ENCODE measurements at regions of chr1 and their contacts with region 1.

Region 1: DNA sequence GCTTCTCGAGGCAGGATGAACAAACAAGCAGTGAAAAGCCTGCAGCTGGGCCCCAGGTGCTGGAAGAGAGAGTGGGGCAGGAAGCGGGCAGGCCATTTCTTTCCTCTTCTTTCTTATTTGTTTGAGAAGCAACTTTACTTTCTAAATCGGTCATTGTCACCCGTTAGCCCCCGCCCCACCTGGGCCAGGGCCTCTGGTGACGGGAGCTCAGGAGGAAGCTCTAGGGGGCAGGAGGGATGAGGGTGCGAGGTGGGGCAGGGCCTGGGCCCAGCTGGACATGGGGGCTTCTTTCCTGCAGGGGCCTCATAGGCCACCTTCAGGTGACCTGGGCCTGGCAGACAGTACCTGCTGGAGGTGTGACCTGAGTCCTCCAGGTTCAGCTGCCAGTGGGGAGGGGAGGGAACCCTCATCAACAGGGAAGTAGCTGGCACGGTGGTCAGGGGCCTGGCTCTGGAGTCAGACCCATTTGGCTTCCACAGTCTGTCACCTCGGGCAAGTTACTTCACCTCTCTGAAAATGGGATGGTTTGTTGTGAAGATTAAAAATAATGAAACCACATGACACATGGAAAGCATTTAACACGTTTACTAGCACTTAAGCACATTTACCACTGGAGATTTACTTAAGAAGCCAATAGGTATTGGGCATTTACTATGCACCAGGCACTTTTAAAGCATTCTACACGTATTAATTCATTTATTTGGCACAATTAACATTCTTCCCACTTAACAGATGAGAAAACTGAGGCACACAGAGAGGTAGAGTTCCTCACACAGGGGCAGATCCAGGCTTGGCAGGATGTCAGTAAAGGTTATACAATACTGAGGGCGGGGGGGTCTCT is 54.1 kb upstream of the ID3 start:
- DNase-seq: peak in 6 of 10 donors; percentile 24 to 76 (median 50)
- ATAC-seq: peak; percentile 59 to 62
- H3K4me3 Mint-ChIP-seq: peak overlapping the region; percentile 43 to 81 (median 64)
- H3K27ac Mint-ChIP-seq: peak overlapping the region; percentile 86 to 100 (median 94)
- H3K4me1 Mint-ChIP-seq: peaks cover 51 to 92% (median 83%) of the 10 kb centered on the region in 4 donors
- H3K27me3 Mint-ChIP-seq: peaks cover 0 to 2% (median 0%) of the 10 kb centered on the region in 5 donors

Region 2: DNA sequence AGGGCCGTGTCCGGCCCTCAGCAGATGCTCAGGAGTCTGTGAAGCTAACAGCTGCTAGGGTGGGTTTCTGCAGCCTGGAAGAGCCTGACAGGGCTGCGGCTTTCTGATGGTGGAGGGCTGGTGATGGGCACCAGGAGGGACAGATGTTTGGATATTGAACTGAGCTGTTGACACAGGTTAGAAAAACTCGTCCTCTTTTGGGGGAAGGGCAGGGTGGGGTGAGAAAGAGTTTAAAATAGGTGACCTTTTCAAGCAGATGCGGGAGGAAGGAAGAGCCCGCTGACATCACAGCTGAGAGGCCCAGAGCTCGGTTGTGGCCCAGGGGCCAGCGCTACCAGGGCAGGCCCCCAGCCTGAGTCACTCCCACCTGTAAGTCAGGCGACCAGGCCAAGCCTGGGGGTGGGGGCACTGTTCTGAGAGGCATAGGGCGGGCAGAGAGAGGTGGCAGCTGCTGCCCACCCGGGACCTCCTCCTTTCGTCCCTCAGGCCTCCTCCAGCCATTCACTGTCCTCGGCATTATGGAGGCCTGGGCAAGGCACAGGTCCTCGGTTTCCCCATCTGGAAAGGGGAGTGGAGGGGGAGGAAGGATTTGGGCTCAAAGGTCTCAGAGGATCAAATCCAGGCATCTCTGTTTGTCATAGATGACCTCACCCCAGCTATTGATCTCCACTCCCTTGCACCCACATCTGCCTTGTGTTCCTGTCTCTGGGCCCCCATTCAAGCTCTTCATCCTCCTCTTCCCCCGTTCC is 21.8 kb before region 1 on chr1:
- POLR2A ChIA-PET with region 1: interaction called, 182 read pairs
- DNase-seq: peak in 2 of 10 donors; percentile 49 to 79
- ATAC-seq: peak; percentile 43 to 60
- H3K4me3 Mint-ChIP-seq: peak overlapping the region; percentile 6 to 70 (median 58)
- H3K27ac Mint-ChIP-seq: peak overlapping the region; percentile 67 to 95 (median 84)
- H3K4me1 Mint-ChIP-seq: peaks cover 38 to 84% (median 71%) of the 10 kb centered on the region in 4 donors
- H3K27me3 Mint-ChIP-seq: no peaks in the 10 kb centered on the region

Region 3: GRCh38 chr1:23627069-23627735 is 13.8 kb after region 1 on chr1:
- POLR2A ChIA-PET with region 1: interaction called, 59 read pairs
- DNase-seq: peak in 6 of 10 donors; percentile 25 to 72 (median 58)
- ATAC-seq: peak; percentile 79 to 88
- H3K4me3 Mint-ChIP-seq: peak overlapping the region; percentile 77 to 95 (median 91)
- H3K27ac Mint-ChIP-seq: peak overlapping the region; percentile 84 to 97 (median 94)
- H3K4me1 Mint-ChIP-seq: peaks cover 42 to 74% (median 72%) of the 10 kb centered on the region in 4 donors
- H3K27me3 Mint-ChIP-seq: no peaks in the 10 kb centered on the region

Region 4: DNA sequence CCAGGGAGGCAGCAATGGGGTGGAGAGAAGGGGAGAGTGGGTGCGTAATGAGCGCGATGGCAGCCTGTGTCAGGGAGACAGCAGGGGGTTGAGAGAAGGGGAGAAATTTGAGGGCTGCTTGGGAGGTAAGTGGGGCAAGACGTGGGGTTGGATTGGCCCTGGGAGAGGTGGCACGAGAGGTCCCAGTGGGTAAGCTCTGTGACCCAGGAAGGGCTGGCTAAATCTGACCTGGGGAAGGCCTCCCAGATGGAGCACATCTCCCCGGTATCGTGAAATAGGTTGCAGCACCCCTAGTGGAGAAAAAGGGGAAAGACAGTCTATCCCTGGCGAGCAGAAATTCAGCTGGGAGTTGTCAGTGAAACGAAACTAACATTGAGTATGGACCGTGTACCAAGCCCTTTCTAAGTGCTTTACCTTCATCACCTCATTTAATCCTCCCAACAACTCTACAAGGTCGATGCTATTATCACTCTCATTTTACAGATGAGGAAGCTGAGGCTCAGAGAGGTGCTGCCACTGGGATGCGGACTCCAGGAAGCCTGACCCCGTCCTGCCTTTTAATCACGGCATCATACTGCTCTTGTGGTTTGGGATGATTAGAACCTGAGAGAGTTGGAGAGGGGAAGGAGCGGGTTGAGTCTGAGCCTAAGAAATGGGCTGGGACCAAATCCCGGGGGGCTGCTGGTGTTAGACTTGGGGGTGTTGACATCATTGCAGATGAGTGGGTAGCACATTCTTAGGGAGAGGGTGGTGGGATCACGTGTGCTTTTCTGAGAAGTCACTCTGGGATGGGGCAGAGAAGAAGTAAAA is 21.6 kb after region 1 on chr1:
- POLR2A ChIA-PET with region 1: interaction called, 59 read pairs
- DNase-seq: peak in 9 of 10 donors; percentile 52 to 77 (median 67)
- ATAC-seq: peak; percentile 83 to 84
- H3K4me3 Mint-ChIP-seq: peak overlapping the region; percentile 52 to 80 (median 74)
- H3K27ac Mint-ChIP-seq: peak overlapping the region; percentile 89 to 98 (median 93)
- H3K4me1 Mint-ChIP-seq: peaks cover 20 to 51% (median 41%) of the 10 kb centered on the region in 4 donors
- H3K27me3 Mint-ChIP-seq: no peaks in the 10 kb centered on the region

Region 5: GRCh38 chr1:23673086-23673813 is 59.8 kb after region 1 on chr1:
- POLR2A ChIA-PET with region 1: no interaction called
- DNase-seq: no peak
- ATAC-seq: no peak
- H3K4me3 Mint-ChIP-seq: no peak overlapping the region
- H3K27ac Mint-ChIP-seq: no peak overlapping the region
- H3K4me1 Mint-ChIP-seq: no peaks in the 10 kb centered on the region
- H3K27me3 Mint-ChIP-seq: peaks cover 2 to 18% (median 6%) of the 10 kb centered on the region in 5 donors

Region 6: DNA sequence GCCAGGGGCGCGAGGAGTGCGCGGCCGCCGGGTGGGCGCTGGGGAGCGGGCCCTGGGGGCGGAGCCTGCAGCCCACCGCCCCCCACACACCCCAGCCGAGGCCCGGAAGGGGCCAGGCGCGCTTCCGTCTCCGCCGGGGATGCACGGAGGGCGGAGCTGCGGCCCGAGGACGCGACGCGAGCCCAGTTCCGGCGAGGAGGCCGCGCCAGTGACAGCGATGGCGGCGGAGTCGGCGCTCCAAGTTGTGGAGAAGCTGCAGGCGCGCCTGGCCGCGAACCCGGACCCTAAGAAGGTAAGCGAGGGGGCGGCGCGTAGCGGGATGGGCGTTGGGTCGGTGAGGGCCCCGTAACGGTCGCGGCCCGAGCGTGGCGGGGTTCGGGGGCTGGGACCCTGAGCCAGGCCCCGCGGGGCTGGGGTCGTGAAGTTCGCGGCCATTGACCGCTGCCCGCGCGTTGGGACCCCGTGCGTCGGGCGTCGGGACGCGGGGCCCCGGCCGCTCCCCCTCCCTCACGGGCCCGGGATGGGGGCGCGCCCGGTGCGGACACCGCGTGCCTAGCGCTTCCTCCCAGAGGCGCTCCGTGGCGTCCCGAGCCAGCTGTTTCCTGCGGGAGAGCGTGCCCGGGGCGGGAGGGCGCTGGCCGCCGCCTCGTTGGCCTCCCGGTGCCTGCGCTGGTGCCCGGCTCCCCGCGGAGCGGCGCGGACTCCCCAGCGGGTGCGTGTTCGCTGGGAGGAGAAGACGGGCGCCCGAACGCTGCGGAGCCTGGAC is 130.1 kb after region 1 on chr1 and contains the start of gene ELOA:
- POLR2A ChIA-PET with region 1: no interaction called
- DNase-seq: peak; percentile 63 to 83 (median 74)
- ATAC-seq: peak; percentile 94
- H3K4me3 Mint-ChIP-seq: peak within 1 kb of the TSS; percentile 87 to 94 (median 91)
- H3K27ac Mint-ChIP-seq: peak within 1 kb of the TSS; percentile 89 to 96 (median 94)
- H3K4me1 Mint-ChIP-seq: peaks cover 24 to 52% (median 48%) of the 10 kb centered on the region in 4 donors
- H3K27me3 Mint-ChIP-seq: no peaks in the 10 kb centered on the region
- polyA plus RNA-seq, gene ELOA: 17.0 to 26.4 (median 19.1) TPM